CD8-positive, alpha-beta T cell (primary cell): ENCODE measurements at regions of chr1 and their contacts with region 1.

Region 1: DNA sequence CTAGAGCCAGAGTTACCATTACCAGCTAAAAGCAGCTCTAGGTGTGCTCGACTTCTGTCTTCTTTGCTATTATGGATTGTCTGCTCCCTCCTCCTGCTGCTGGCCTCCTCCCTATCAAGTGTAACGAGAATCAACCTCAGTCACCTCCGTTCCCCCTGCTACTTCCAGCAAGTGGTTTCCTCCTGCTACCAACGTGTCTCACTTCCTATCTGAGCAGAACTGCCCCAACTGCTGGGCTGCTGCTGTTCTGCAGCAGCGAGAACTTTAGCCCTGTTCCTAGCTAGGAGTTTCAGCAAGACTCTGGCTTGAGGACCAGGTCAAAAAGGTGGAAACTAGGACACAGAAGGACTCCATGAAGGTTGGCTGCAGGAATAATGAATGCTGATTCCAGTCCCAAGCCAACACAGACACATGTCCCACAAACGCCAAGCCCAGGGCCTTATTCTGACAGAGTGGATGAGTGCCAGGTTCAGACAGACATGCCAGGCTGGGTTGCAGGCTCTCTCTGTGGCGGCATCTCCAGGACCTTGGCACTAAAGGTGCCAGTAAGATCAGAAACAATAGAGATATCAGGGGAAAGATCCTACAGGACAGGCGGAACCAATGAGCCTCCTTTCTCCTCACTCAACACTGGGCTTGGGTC is 46.9 kb downstream of the CD34 start:
- DNase-seq: peak in 7 of 9 experiments; percentile 36 to 80 (median 61)
- ATAC-seq: peak; percentile 47
- H3K4me3 ChIP-seq: peak overlapping the region in 1 of 2 experiments; percentile 5
- H3K4me3 Mint-ChIP-seq: peak overlapping the region; percentile 56
- H3K27ac ChIP-seq: peak overlapping the region; percentile 23 to 61
- H3K27ac Mint-ChIP-seq: peak overlapping the region; percentile 96
- H3K4me1 ChIP-seq: peaks cover 77% of the 10 kb centered on the region
- H3K4me1 Mint-ChIP-seq: peaks cover 74% of the 10 kb centered on the region
- H3K27me3 ChIP-seq: no peaks in the 10 kb centered on the region
- H3K27me3 Mint-ChIP-seq: no peaks in the 10 kb centered on the region
- CTCF ChIP-seq: no peak

Region 2: GRCh38 chr1:207374887-207375286 is 489.1 kb before region 1 on chr1:
- CTCF ChIA-PET with region 1: no interaction called
- POLR2A ChIA-PET with region 1: no interaction called
- intact Hi-C with region 1: no loop called
- DNase-seq: no peak
- ATAC-seq: no peak
- H3K4me3 ChIP-seq: no peak overlapping the region
- H3K4me3 Mint-ChIP-seq: no peak overlapping the region
- H3K27ac ChIP-seq: no peak overlapping the region
- H3K27ac Mint-ChIP-seq: no peak overlapping the region
- H3K4me1 ChIP-seq: no peaks in the 10 kb centered on the region
- H3K4me1 Mint-ChIP-seq: no peaks in the 10 kb centered on the region
- H3K27me3 ChIP-seq: no peaks in the 10 kb centered on the region
- H3K27me3 Mint-ChIP-seq: no peaks in the 10 kb centered on the region
- CTCF ChIP-seq: no peak

Region 3: GRCh38 chr1:207751790-207752455 is 112.1 kb before region 1 on chr1 and contains the start of gene CD46:
- CTCF ChIA-PET with region 1: interaction called, 3 read pairs
- POLR2A ChIA-PET with region 1: no interaction called
- intact Hi-C with region 1: loop called (anchors 2 to 5 kb)
- DNase-seq: peak; percentile 85 to 97 (median 94)
- ATAC-seq: peak; percentile 95
- H3K4me3 ChIP-seq: peak within 1 kb of the TSS; percentile 76 to 91
- H3K4me3 Mint-ChIP-seq: peak within 1 kb of the TSS; percentile 100
- H3K27ac ChIP-seq: peak within 1 kb of the TSS; percentile 58 to 90
- H3K27ac Mint-ChIP-seq: peak within 1 kb of the TSS; percentile 97
- H3K4me1 ChIP-seq: peaks cover 51% of the 10 kb centered on the region
- H3K4me1 Mint-ChIP-seq: peaks cover 81% of the 10 kb centered on the region
- H3K27me3 ChIP-seq: no peaks in the 10 kb centered on the region
- H3K27me3 Mint-ChIP-seq: no peaks in the 10 kb centered on the region
- CTCF ChIP-seq: no peak
- total RNA-seq, gene CD46: 108 to 109 TPM

Region 4: DNA sequence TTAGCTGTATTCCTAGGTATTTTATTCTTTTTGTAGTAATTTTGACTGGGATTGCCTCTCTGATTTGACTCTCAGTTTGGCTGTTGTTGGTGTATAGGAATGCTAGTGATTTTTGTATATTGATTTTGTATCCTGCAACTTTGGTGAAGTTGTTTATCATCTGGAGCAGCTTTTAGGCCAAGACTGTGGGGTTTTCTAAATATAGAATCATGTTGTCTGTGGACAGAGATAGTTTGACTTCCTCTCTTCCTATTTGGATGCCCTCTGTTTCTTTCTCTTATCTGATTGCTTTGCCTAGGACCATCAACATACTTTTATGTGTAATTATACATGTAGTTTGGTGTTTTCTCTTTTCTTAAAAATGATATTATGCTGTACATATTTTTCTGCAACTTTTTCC is 85.0 kb before region 1 on chr1:
- CTCF ChIA-PET with region 1: no interaction called
- POLR2A ChIA-PET with region 1: no interaction called
- intact Hi-C with region 1: no loop called
- DNase-seq: no peak
- ATAC-seq: no peak
- H3K4me3 ChIP-seq: no peak overlapping the region
- H3K4me3 Mint-ChIP-seq: no peak overlapping the region
- H3K27ac ChIP-seq: no peak overlapping the region
- H3K27ac Mint-ChIP-seq: peak overlapping the region; percentile 23
- H3K4me1 ChIP-seq: no peaks in the 10 kb centered on the region
- H3K4me1 Mint-ChIP-seq: peaks cover 41% of the 10 kb centered on the region
- H3K27me3 ChIP-seq: no peaks in the 10 kb centered on the region
- H3K27me3 Mint-ChIP-seq: no peaks in the 10 kb centered on the region
- CTCF ChIP-seq: no peak

Region 5: GRCh38 chr1:207840380-207840779 is 23.6 kb before region 1 on chr1:
- CTCF ChIA-PET with region 1: interaction called, 321 read pairs
- POLR2A ChIA-PET with region 1: interaction called, 11 read pairs
- intact Hi-C with region 1: no loop called
- DNase-seq: peak in 1 of 9 experiments; percentile 36
- ATAC-seq: no peak
- H3K4me3 ChIP-seq: no peak overlapping the region
- H3K4me3 Mint-ChIP-seq: no peak overlapping the region
- H3K27ac ChIP-seq: no peak overlapping the region
- H3K27ac Mint-ChIP-seq: peak overlapping the region; percentile 53
- H3K4me1 ChIP-seq: peaks cover 49% of the 10 kb centered on the region
- H3K4me1 Mint-ChIP-seq: peaks cover 90% of the 10 kb centered on the region
- H3K27me3 ChIP-seq: no peaks in the 10 kb centered on the region
- H3K27me3 Mint-ChIP-seq: no peaks in the 10 kb centered on the region
- CTCF ChIP-seq: no peak

Region 6: DNA sequence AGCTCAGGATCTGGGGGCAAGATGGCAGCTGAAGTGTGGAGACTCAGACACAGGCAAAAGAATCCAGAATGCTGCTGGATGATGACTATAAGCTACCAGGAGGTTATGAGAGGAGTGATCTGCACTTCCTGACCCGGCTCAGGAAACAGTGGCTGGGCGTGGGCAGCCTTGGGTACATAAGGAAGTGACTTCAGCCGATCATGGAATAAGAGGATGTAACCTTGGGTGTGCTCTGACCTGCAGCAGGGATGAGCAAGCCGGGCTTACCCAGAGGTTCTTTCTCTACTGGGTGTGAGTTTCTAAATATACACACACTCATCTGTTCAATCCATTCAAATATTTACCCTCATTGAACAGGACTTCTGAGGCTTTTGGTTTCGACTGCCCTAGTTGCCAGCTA is 15.8 kb before region 1 on chr1:
- CTCF ChIA-PET with region 1: interaction called, 13 read pairs
- POLR2A ChIA-PET with region 1: interaction called, 5 read pairs
- intact Hi-C with region 1: loop called (anchors 2 kb)
- DNase-seq: peak in 2 of 9 experiments; percentile 48 to 50
- ATAC-seq: peak; percentile 39
- H3K4me3 ChIP-seq: no peak overlapping the region
- H3K4me3 Mint-ChIP-seq: peak overlapping the region; percentile 50
- H3K27ac ChIP-seq: no peak overlapping the region
- H3K27ac Mint-ChIP-seq: peak overlapping the region; percentile 60
- H3K4me1 ChIP-seq: peaks cover 69% of the 10 kb centered on the region
- H3K4me1 Mint-ChIP-seq: peaks cover 91% of the 10 kb centered on the region
- H3K27me3 ChIP-seq: no peaks in the 10 kb centered on the region
- H3K27me3 Mint-ChIP-seq: no peaks in the 10 kb centered on the region
- CTCF ChIP-seq: no peak

Region 7: GRCh38 chr1:207853372-207853757 is 10.6 kb before region 1 on chr1:
- CTCF ChIA-PET with region 1: interaction called, 13 read pairs
- POLR2A ChIA-PET with region 1: interaction called, 5 read pairs
- intact Hi-C with region 1: loop called (anchors 2 kb)
- DNase-seq: no peak
- ATAC-seq: no peak
- H3K4me3 ChIP-seq: no peak overlapping the region
- H3K4me3 Mint-ChIP-seq: peak overlapping the region; percentile 29
- H3K27ac ChIP-seq: no peak overlapping the region
- H3K27ac Mint-ChIP-seq: no peak overlapping the region
- H3K4me1 ChIP-seq: peaks cover 64% of the 10 kb centered on the region
- H3K4me1 Mint-ChIP-seq: peaks cover 87% of the 10 kb centered on the region
- H3K27me3 ChIP-seq: no peaks in the 10 kb centered on the region
- H3K27me3 Mint-ChIP-seq: no peaks in the 10 kb centered on the region
- CTCF ChIP-seq: no peak

Region 8: DNA sequence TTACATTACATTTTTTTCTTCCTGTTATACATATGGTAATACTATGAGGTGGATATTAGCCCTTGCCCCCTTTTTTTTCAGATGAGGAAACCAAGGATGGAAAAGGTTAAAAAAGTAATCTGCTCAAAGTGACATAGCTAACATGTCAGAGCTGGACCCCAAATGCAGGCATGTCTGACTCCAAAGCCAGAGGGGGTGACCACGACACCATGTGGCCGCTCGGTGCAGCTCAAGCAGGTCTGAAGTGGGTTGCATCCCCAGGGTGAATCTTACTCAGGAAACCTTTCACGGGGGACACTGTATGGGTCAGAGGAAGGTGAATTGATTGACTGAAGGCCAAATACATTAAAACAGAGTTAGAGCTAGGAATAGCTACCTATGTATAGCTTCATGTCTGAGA is 12.1 kb after region 1 on chr1:
- CTCF ChIA-PET with region 1: interaction called, 189 read pairs
- POLR2A ChIA-PET with region 1: interaction called, 6 read pairs
- intact Hi-C with region 1: no loop called
- DNase-seq: peak in 2 of 9 experiments; percentile 29 to 43
- ATAC-seq: no peak
- H3K4me3 ChIP-seq: no peak overlapping the region
- H3K4me3 Mint-ChIP-seq: no peak overlapping the region
- H3K27ac ChIP-seq: no peak overlapping the region
- H3K27ac Mint-ChIP-seq: peak overlapping the region; percentile 14
- H3K4me1 ChIP-seq: peaks cover 32% of the 10 kb centered on the region
- H3K4me1 Mint-ChIP-seq: peaks cover 47% of the 10 kb centered on the region
- H3K27me3 ChIP-seq: no peaks in the 10 kb centered on the region
- H3K27me3 Mint-ChIP-seq: peaks cover 1% of the 10 kb centered on the region
- CTCF ChIP-seq: no peak

Region 9: GRCh38 chr1:207885129-207886032 is 21.4 kb after region 1 on chr1:
- CTCF ChIA-PET with region 1: interaction called, 189 read pairs
- POLR2A ChIA-PET with region 1: interaction called, 24 read pairs
- intact Hi-C with region 1: loop called in 1 of 2 experiments (anchors 1 kb)
- DNase-seq: peak; percentile 43 to 87 (median 68)
- ATAC-seq: peak; percentile 74
- H3K4me3 ChIP-seq: no peak overlapping the region
- H3K4me3 Mint-ChIP-seq: peak overlapping the region; percentile 20
- H3K27ac ChIP-seq: no peak overlapping the region
- H3K27ac Mint-ChIP-seq: peak overlapping the region; percentile 96
- H3K4me1 ChIP-seq: peaks cover 26% of the 10 kb centered on the region
- H3K4me1 Mint-ChIP-seq: peaks cover 37% of the 10 kb centered on the region
- H3K27me3 ChIP-seq: no peaks in the 10 kb centered on the region
- H3K27me3 Mint-ChIP-seq: peaks cover 3% of the 10 kb centered on the region
- CTCF ChIP-seq: peak; percentile 86